Activated naive CD4-positive, alpha-beta T cell treated with anti-CD3 and anti-CD28 coated beads, Interleukin-2, amount 10 ng/mL, durations not matched to agents 7 days and 5 days (primary cell): ENCODE measurements at regions of chr21 and their contacts with region 1.

Region 1: DNA sequence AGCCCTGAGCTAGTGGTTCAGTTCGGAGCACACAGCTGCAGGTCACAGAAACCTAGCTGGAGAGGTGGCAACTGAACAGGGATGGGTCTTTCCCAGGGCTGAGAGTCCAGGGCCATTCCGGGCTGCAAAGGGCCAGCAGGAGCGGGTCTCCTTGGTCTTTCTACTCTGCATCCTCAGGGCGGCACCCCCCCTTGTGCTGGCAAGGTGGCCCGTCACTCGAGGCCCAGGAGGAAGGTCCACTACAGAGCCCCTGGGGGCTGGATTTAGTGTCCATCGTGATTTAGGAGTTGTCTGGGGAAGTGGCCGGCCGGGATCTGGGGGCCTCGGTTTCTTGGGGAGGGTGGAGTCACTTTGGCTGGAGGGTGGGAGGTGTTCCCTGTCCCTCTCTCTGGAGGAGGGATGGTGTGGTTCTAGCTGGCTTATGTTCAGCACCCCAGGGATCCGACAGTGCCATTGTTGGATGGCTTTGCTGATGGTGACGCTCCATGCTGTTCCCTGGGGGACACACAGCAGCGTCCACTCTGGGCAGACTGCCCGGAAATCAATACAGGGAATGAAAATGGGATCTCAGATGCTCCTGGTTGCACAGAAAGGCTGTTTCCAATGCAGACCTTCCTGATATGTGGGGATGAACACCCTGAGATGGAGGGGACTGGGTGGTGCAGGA is 64.4 kb downstream of the UMODL1 start:
- DNase-seq: no peak
- H3K4me3 Mint-ChIP-seq: no peak overlapping the region
- H3K27ac Mint-ChIP-seq: no peak overlapping the region
- H3K4me1 Mint-ChIP-seq: no peaks in the 10 kb centered on the region
- H3K27me3 Mint-ChIP-seq: peaks cover 12% of the 10 kb centered on the region

Region 2: GRCh38 chr21:42145569-42146272 is 10.2 kb after region 1 on chr21:
- CTCF ChIA-PET with region 1: interaction called, 10 read pairs
- DNase-seq: peak; percentile 76
- H3K4me3 Mint-ChIP-seq: no peak overlapping the region
- H3K27ac Mint-ChIP-seq: no peak overlapping the region
- H3K4me1 Mint-ChIP-seq: peaks cover 4% of the 10 kb centered on the region
- H3K27me3 Mint-ChIP-seq: peaks cover 28% of the 10 kb centered on the region

Region 3: DNA sequence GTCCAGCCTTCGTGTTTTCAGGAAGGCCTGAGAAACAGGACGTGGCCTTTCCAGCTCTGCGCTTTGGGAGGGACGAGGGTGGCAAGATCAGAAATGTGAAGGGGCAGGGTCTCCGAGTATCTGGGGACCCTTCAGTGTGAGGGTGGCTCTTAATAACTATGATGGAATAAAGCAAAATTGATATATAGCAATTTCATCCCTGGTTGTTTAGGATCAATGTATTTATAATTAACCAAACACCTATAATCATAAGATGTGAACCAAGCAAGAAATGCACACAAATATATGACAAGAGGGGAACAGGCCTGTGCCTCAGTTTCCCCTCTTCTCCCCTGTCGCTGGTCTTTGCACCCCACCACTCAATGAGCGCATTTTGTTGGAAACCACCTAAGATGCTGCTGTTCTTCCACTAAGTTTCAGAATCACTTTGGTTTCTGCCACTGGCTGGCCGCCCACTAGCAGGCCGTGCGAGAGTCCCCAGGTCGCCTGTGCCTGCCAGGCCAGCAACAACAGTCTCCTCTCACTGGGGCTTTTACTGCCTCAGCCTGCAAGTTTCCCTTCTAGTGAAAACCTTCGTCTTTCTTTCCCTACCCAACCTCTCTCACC is 304.8 kb after region 1 on chr21:
- CTCF ChIA-PET with region 1: no interaction called
- DNase-seq: peak; percentile 12
- H3K4me3 Mint-ChIP-seq: no peak overlapping the region
- H3K27ac Mint-ChIP-seq: peak overlapping the region; percentile 45
- H3K4me1 Mint-ChIP-seq: peaks cover 24% of the 10 kb centered on the region
- H3K27me3 Mint-ChIP-seq: no peaks in the 10 kb centered on the region